ENCODE measurements at regions of chr9 and their contacts with region 1.

Region 1: GRCh38 chr9:125558453-125559092 is 148.4 kb downstream of the MAPKAP1 start:
- DNase-seq: peak; percentile 69
- CTCF ChIP-seq: peak; percentile 77

Region 2: DNA sequence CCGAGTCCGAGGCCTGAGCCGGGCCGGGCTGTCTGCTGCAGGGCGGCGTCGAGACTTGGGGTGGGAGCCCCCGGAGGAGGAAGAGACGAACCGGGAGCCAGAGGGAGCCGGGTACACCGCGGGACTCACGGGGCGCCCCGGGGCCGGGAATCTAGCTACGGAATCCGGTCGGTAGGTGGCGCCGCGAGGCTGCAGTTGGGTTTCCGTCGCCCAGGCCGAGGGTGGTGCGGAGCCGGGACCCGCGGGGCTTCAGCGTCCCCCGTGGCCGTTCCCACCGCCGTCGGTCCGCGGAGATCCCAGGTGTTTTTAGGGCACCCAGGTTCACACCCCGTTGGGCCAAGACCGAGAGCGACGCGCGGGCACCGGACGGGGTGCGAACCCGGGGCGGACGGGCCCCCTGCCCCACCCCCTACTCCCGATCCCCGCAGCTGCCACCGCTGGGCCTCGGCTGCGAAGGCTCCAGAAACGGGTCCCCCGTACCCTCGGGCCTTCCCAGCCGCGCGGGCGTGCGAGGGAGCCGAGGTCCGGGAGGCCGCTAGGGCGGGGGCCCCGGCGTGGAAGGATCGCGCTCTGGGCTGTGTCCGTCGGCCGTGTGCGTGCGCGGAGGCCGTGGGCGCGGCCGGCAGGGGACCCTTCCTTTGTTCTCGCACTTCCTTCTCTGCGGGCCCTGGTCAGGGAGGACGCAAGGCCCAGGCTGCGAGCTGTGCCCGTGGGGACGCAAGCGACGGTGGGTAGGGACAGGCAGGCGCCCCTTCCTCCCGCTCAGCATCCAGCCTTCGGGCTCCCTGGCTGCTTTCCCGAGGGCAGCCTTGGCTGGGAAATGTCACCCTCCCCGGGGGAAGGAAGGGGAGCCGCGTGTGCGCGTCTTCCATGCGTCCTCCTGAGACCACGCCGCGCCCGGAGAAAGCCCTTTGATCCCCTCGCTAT is 150.3 kb before region 1 on chr9:
- CTCF ChIA-PET with region 1: interaction called, 10 read pairs
- POLR2A ChIA-PET with region 1: no interaction called
- DNase-seq: peak; percentile 92
- CTCF ChIP-seq: peak; percentile 88

Region 3: DNA sequence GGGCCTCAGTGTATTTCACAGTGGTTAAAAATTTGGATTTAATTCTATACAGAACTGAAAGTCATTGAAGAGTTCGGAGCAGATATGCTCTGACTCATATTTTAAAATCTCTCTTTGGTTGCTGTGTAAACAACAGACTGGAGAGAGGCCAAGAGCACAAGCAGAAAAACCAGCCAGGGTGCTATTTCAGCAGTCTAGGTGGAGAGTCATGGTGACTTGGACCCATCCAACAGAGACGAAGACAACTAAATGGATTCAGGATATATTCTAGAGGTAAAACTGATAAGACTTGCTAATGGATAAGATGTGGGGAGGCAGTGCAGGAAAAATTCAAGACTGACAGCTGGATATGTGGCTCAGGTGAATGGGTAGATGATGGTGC is 20.5 kb before region 1 on chr9:
- CTCF ChIA-PET with region 1: interaction called, 22 read pairs
- POLR2A ChIA-PET with region 1: no interaction called
- DNase-seq: no peak
- CTCF ChIP-seq: no peak

Region 4: GRCh38 chr9:125574126-125574877 is 15.7 kb after region 1 on chr9:
- CTCF ChIA-PET with region 1: interaction called, 45 read pairs
- POLR2A ChIA-PET with region 1: no interaction called
- DNase-seq: no peak
- CTCF ChIP-seq: no peak

Region 5: GRCh38 chr9:125593585-125594229 is 35.1 kb after region 1 on chr9:
- CTCF ChIA-PET with region 1: interaction called, 13 read pairs
- POLR2A ChIA-PET with region 1: no interaction called
- DNase-seq: no peak
- CTCF ChIP-seq: no peak

Region 6: DNA sequence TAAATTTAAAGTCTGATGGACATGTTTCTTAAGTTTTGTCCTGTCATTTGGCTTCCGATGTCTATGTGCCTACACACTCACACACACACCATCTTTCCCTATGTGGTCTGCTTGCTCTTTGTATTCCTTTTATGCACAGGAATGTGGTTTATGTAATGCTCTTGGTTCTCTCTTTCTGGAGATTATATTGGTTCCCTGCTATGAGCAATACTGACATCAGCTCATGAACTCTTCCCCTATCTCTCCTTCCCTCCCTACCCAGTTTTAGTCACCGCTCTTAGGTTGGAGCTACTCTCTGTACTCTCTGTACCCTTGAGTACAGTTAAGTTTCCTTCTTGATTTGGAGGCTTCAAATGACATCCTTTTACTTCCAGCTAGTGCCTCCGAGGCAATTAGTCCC is 690.1 kb after region 1 on chr9:
- CTCF ChIA-PET with region 1: no interaction called
- POLR2A ChIA-PET with region 1: no interaction called
- DNase-seq: no peak
- CTCF ChIP-seq: no peak